ENCODE measurements at regions of chr3 and their contacts with region 1.

Region 1: GRCh38 chr3:128804017-128804810 is 75.2 kb upstream of the ACAD9 start:
- DNase-seq: peak; percentile 69
- H3K4me3 Mint-ChIP-seq: peak overlapping the region; percentile 58
- H3K27ac Mint-ChIP-seq: peak overlapping the region; percentile 88
- H3K4me1 Mint-ChIP-seq: peaks cover 75% of the 10 kb centered on the region
- H3K27me3 Mint-ChIP-seq: no peaks in the 10 kb centered on the region

Region 2: GRCh38 chr3:128617557-128618397 is 186.4 kb before region 1 on chr3:
- intact Hi-C with region 1: loop called (anchors 2 kb)
- DNase-seq: peak; percentile 99
- H3K4me3 Mint-ChIP-seq: peak overlapping the region; percentile 86
- H3K27ac Mint-ChIP-seq: peak overlapping the region; percentile 84
- H3K4me1 Mint-ChIP-seq: peaks cover 31% of the 10 kb centered on the region
- H3K27me3 Mint-ChIP-seq: no peaks in the 10 kb centered on the region

Region 3: DNA sequence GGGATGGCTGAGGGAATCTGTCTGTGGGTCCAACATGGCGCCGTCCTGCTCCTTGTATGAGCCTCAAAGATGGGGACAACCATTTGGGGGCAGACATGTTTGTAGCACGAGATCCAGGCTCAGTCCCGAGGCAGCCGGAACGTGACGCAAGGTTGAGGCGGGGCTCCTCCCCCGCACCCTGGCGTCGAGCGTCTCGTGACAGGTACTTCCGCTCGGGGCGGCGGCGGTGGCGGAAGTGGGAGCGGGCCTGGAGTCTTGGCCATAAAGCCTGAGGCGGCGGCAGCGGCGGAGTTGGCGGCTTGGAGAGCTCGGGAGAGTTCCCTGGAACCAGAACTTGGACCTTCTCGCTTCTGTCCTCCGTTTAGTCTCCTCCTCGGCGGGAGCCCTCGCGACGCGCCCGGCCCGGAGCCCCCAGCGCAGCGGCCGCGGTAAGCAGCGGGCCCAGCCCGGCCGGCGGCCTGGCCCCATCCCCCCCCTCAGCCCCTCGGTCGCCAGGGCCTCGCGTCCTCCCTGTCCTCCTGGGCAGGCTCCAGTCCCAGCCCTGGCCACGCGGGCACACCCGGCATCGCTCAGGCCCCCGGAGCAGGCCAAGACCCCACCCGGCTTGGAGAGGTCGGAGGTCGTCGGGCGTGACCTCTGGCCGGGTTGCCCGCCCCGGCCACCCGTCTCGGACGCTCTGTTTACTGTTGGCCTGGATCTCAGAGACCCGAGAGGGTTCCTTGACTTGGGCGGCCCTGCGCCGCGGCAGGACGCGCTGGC is 78.1 kb before region 1 on chr3 and contains the start of gene RAB7A:
- intact Hi-C with region 1: loop called (anchors 1 kb)
- DNase-seq: peak; percentile 94
- H3K4me3 Mint-ChIP-seq: peak within 1 kb of the TSS; percentile 90
- H3K27ac Mint-ChIP-seq: peak within 1 kb of the TSS; percentile 80
- H3K4me1 Mint-ChIP-seq: peaks cover 46% of the 10 kb centered on the region
- H3K27me3 Mint-ChIP-seq: peaks cover 3% of the 10 kb centered on the region
- total RNA-seq, gene RAB7A: 320 and 322 TPM in 2 replicates

Region 4: GRCh38 chr3:128787256-128788240 is 16.7 kb before region 1 on chr3:
- intact Hi-C with region 1: loop called (anchors 1 kb)
- DNase-seq: no peak
- H3K4me3 Mint-ChIP-seq: peak overlapping the region; percentile 73
- H3K27ac Mint-ChIP-seq: peak overlapping the region; percentile 96
- H3K4me1 Mint-ChIP-seq: peaks cover 66% of the 10 kb centered on the region
- H3K27me3 Mint-ChIP-seq: no peaks in the 10 kb centered on the region

Region 5: GRCh38 chr3:128845778-128846485 is 41.7 kb after region 1 on chr3:
- intact Hi-C with region 1: loop called (anchors 2 kb)
- DNase-seq: peak; percentile 78
- H3K4me3 Mint-ChIP-seq: peak overlapping the region; percentile 51
- H3K27ac Mint-ChIP-seq: peak overlapping the region; percentile 91
- H3K4me1 Mint-ChIP-seq: peaks cover 18% of the 10 kb centered on the region
- H3K27me3 Mint-ChIP-seq: no peaks in the 10 kb centered on the region

Region 6: DNA sequence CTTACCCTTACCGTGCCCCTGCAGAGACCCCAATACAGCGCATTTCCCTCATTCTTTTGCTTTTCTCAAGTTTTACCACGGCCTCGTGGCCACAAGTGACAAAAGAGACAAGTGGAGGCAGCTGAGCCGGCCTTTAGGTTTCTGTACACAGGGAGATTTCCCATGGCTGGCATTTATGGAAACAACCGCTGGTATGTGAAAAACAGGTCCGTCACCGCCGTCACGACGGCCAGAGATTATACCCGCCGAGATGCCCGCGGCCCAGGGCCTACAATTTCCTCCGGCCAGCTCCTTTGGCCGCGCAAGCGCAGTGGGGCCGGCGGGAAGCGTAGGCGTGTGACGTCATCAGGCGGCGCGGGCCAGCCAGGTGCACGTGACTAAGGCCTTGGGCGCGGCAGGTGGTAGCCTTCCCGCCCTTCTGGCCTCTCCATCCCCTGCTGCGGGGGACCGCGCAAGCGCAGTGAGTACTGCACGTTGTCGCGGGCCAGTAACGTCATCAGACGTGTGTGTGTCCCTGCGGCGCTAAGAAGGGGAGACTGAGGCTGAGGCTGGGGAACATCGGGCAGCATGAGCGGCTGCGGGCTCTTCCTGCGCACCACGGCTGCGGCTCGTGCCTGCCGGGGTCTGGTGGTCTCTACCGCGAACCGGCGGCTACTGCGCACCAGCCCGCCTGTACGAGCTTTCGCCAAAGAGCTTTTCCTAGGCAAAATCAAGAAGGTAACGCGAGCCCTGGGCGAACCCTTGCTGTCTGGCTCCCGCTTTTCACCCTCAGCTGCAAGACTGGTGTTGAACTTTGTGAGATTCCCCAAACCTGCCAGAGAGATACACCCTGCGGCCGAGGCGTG is 75.1 kb after region 1 on chr3 and contains the start of gene ACAD9:
- intact Hi-C with region 1: loop called (anchors 2 kb)
- DNase-seq: peak; percentile 98
- H3K4me3 Mint-ChIP-seq: peak within 1 kb of the TSS; percentile 93
- H3K27ac Mint-ChIP-seq: peak within 1 kb of the TSS; percentile 95
- H3K4me1 Mint-ChIP-seq: peaks cover 51% of the 10 kb centered on the region
- H3K27me3 Mint-ChIP-seq: no peaks in the 10 kb centered on the region
- total RNA-seq, gene ACAD9: 60.8 and 68.9 TPM in 2 replicates

Region 7: DNA sequence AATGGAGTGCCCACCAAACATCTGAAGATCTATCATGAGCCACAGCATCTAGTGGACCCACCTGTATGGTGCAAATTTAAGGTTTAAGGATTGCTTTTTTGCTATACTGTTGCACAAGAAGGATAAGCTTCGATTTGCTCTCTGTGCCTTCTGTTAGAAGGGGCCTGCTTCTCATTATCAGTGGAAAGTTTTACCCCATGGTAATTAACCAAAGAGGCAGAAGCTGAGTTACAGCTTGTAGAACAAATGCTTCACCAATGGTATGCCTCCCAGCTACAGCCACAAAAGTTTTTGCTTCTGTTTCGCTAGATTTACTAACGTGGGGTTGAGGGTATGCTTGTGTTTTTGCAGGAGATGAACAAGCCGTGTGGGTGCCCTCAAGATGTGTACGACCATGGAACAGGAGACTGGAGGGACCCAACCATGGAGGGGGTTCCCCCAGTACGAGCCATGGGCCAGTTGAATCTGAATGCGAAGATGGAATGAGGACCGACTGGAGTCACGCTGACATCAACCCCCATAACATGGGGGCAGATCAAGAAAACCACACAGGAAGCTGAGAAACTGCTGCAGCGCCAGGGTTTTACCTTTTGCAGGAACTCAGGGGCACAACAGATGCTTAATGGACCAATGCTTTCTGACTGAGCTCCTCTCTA is 118.7 kb after region 1 on chr3:
- intact Hi-C with region 1: no loop called
- DNase-seq: peak; percentile 37
- H3K4me3 Mint-ChIP-seq: peak overlapping the region; percentile 58
- H3K27ac Mint-ChIP-seq: peak overlapping the region; percentile 78
- H3K4me1 Mint-ChIP-seq: peaks cover 23% of the 10 kb centered on the region
- H3K27me3 Mint-ChIP-seq: peaks cover 2% of the 10 kb centered on the region

Region 8: GRCh38 chr3:129233538-129233937 is 429.3 kb after region 1 on chr3:
- intact Hi-C with region 1: loop called (anchors 10 kb)
- DNase-seq: no peak
- H3K4me3 Mint-ChIP-seq: no peak overlapping the region
- H3K27ac Mint-ChIP-seq: peak overlapping the region; percentile 73
- H3K4me1 Mint-ChIP-seq: peaks cover 58% of the 10 kb centered on the region
- H3K27me3 Mint-ChIP-seq: no peaks in the 10 kb centered on the region

Measured in activated T-helper 2 cell treated with anti-CD3 and anti-CD28 coated beads, Interferon-gamma antibody, Interleukin-2, Interleukin-4, amounts not matched to agents 10 μg/mL and 5 μg/mL and 100 μg/mL, durations not matched to agents 14 hours and 24 hours and 36 hours (primary cell).